Posterior cingulate gyrus (tissue), 11 donors: ENCODE measurements at regions of chr13 and their contacts with region 1.

Region 1: GRCh38 chr13:21603531-21604448 is at the start of gene MICU2:
- DNase-seq: peak; percentile 85 to 98 (median 90)

Region 2: DNA sequence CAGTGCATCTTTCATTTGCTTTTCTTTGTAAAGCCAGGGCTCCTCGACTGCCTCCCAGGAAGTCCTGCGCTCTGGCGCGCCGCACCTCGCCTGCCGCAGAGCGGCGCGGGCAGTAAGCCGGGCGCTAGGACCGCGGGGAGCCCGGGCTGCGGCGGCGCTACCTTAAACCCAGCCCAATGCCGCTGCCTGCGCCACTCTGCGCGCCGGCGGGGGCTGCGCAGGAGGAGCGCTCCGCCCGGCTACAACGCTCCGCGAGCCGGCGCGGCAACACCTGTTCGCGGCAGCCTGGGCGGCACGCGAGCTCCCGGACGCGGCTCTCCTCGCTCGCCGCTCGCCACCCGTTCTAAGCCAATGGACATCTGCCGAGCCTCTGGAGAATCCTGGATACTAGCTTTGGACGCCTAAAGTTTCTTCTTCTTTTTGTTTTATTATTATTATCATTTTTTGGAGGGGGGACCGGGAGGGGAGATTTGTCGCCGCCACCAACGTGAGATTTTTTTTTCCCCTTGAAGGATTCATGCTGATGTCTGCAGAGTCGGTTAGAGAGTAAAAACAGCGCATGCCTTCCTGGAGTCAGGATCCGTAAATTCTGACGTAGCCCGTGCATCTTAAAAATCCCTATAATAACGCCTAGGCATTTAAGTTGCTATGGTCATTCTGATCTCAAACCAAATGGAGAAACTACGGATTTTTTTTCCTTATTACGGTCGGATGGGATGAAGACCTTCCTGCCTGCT is 67.3 kb after region 1 on chr13 and contains the start of gene FGF9:
- intact Hi-C with region 1: loop called (anchors 5 kb)
- DNase-seq: peak; percentile 51 to 97 (median 77)

Region 3: DNA sequence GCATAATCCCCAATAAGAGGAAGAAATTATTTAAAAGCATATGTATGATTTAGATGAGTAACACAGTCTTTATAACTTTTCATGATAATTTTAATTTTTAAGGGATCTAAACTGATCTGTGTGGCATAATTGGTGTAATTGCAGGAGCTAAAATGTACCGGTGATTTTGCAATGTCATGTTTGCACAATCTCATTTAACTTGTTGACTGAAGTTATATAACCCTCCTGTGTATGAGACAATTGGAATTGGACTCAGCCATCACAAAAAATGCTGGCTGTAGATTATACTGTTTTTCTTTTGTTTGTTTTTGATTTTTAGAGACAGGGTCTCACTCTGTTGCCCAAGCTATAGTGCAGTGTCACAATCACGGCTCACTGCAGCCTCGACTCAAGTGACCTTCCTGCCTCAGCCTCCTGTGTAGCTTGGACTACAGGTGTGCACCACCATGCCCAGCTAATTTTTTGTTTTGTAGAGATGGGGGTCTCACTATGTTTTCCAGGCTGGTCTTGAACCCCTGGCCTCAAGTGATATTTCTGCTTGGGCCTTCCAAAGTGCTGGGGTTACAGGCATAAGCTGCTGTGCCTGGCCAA is 93.2 kb after region 1 on chr13:
- intact Hi-C with region 1: no loop called
- DNase-seq: no peak

Region 4: DNA sequence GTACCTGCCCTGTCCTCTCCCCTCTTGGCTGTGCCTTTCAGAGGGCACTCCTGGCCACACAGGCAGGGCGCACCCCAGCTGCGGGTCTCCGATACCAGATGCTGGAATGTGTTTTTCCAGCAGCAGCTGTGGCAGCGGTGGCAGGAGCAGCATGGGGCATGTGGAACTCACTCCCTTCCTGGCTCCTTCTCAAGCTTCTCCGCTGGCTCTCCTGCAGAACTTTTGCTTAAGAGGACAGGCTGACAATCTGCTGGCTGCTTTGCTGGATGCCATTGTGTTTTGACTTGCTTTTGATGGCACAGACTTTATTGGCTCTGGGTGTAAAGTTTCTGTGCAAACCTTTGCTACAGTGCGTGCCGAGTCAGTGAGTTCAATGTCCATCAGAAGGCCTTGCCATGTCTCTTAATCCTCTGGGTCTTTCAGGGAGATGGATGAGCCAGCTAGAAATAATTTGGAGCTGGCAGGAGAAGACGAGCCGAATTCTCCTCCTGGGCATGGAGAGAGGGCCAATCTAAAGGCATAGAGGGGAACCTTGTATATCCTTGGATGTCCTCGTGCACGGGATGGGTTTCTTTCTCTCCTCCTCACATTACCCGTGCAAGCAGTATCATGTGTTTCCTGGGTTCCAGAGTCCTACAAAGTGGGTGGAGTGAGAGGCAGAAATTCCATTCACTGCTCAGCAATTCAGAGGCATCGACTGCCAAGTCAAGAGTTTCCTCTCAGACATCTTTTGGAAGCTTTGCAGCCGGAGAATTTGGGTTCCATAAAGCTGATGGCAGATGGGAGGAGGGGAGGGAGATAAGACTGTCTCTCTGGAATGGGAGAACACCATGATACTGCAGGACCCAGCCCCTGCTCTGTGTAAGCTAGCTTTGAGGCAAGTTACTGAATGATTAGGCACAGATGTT is 298.3 kb after region 1 on chr13:
- intact Hi-C with region 1: no loop called
- DNase-seq: no peak